Right cardiac atrium (tissue), 5 donors: ENCODE measurements at regions of chr3 and their contacts with region 1.

Region 1: GRCh38 chr3:146218880-146219866 is 31.7 kb downstream of the PLSCR4 start:
- DNase-seq: peak in 2 of 3 donors; percentile 53 to 58
- ATAC-seq: no peak
- H3K4me3 ChIP-seq: no peak overlapping the region
- H3K27ac ChIP-seq: no peak overlapping the region
- H3K4me1 ChIP-seq: peaks cover 6% of the 10 kb centered on the region
- H3K27me3 ChIP-seq: no peaks in the 10 kb centered on the region

Region 2: GRCh38 chr3:146277953-146278631 is 58.9 kb after region 1 on chr3:
- intact Hi-C with region 1: no loop called
- DNase-seq: no peak
- ATAC-seq: peak; percentile 78 to 85
- H3K4me3 ChIP-seq: no peak overlapping the region
- H3K27ac ChIP-seq: no peak overlapping the region
- H3K4me1 ChIP-seq: no peaks in the 10 kb centered on the region
- H3K27me3 ChIP-seq: no peaks in the 10 kb centered on the region

Region 3: GRCh38 chr3:146326670-146327543 is 107.7 kb after region 1 on chr3:
- intact Hi-C with region 1: loop called (anchors 2 to 5 kb)
- DNase-seq: peak in 2 of 3 donors; percentile 34 to 72
- ATAC-seq: peak; percentile 88 to 91
- H3K4me3 ChIP-seq: no peak overlapping the region
- H3K27ac ChIP-seq: no peak overlapping the region
- H3K4me1 ChIP-seq: no peaks in the 10 kb centered on the region
- H3K27me3 ChIP-seq: no peaks in the 10 kb centered on the region

Region 4: DNA sequence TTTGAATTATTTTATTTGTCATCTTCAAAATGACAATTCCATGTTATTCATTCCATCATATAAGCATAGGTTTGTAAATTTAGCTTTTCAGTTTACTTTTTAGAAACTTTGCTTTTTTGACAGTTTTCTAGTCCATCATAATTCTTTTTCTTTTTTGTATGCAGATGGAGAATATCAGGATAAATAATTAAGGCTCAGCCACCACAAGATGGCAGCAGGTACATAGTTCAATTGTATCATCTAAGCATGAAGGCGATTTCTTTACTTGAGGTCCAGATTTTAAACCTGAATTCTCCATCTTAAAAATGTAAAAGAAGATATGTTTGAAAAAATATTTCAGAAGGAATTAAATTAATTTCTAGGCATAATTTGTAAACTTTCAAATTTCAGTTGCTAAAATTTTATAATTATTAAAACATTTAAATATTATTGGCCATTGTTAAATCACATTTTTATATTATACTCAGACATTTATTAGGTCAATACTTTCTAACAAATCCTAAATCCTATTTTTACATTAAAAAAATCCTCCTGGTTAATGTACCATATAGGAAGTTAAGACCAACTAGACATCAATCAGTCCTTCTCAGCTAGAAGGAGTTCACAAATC is 370.8 kb after region 1 on chr3:
- intact Hi-C with region 1: loop called in 1 of 4 experiments (anchors 10 kb)
- DNase-seq: peak in 1 of 3 donors; percentile 55
- ATAC-seq: peak in 1 of 2 donors; percentile 51
- H3K4me3 ChIP-seq: no peak overlapping the region
- H3K27ac ChIP-seq: no peak overlapping the region
- H3K4me1 ChIP-seq: no peaks in the 10 kb centered on the region
- H3K27me3 ChIP-seq: no peaks in the 10 kb centered on the region